ENCODE measurements at regions of chr10 and their contacts with region 1.

Region 1: DNA sequence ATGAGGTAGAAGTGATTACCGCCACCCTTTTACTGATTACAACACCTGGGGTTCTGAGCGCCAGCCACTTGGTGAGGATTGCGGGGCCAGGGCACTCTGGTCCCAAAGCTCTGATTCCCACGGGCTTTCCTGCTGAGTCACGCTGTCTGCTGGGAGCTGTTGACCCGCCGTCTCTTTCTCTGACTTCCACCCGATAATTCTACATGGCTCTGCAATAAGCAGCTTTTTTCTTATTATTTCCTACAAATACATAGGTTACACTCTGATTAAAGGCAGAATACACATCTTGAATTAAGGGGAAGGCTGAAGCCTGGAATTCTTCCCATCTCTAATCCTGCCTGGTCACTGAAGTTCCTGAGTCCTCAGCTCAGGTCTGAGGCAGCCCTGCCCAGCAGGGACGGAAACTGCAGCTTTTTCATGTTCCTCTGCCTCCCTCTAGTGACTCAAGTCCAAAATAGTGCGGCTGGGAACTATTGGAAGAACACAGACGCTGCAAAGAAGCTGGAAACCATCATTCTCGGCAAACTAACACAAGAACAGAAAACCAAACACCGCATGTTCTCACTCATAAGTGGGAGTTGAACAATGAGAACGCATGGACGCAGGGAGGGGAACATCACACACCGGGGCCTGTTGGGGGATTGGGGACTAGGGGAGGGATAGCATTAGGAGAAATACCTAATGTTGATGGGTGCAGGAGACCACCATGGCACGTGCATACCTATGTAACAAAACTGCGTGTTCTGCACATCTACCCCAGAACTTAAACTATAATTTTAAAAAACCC is 178.3 kb downstream of the PRKCQ start:
- DNase-seq: peak; percentile 25 to 69 (median 59)
- H3K4me3 ChIP-seq: no peak overlapping the region
- H3K4me3 Mint-ChIP-seq: peak overlapping the region in 1 of 7 donors; percentile 36
- H3K27ac ChIP-seq: no peak overlapping the region
- H3K27ac Mint-ChIP-seq: peak overlapping the region in 5 of 8 donors; percentile 15 to 89 (median 80)
- H3K4me1 ChIP-seq: peaks cover 12% of the 10 kb centered on the region
- H3K4me1 Mint-ChIP-seq: peaks cover 7 to 16% (median 13%) of the 10 kb centered on the region in 3 donors
- H3K27me3 ChIP-seq: no peaks in the 10 kb centered on the region
- H3K27me3 Mint-ChIP-seq: peaks cover 0 to 1% of the 10 kb centered on the region in 2 donors

Region 2: GRCh38 chr10:6088721-6089390 is 312.9 kb before region 1 on chr10 and contains the start of gene RBM17:
- CTCF ChIA-PET with region 1: interaction called, 13 read pairs
- POLR2A ChIA-PET with region 1: no interaction called
- DNase-seq: peak; percentile 93 to 99 (median 98)
- H3K4me3 ChIP-seq: peak within 1 kb of the TSS; percentile 91
- H3K4me3 Mint-ChIP-seq: peak within 1 kb of the TSS; percentile 85 to 96 (median 92)
- H3K27ac ChIP-seq: peak within 1 kb of the TSS; percentile 79
- H3K27ac Mint-ChIP-seq: peak within 1 kb of the TSS; percentile 67 to 94 (median 88)
- H3K4me1 ChIP-seq: peaks cover 50% of the 10 kb centered on the region
- H3K4me1 Mint-ChIP-seq: peaks cover 50 to 63% (median 58%) of the 10 kb centered on the region in 3 donors
- H3K27me3 ChIP-seq: no peaks in the 10 kb centered on the region
- H3K27me3 Mint-ChIP-seq: peaks cover 0 to 3% of the 10 kb centered on the region in 2 donors
- total RNA-seq, gene RBM17: 269 to 282 TPM

Region 3: DNA sequence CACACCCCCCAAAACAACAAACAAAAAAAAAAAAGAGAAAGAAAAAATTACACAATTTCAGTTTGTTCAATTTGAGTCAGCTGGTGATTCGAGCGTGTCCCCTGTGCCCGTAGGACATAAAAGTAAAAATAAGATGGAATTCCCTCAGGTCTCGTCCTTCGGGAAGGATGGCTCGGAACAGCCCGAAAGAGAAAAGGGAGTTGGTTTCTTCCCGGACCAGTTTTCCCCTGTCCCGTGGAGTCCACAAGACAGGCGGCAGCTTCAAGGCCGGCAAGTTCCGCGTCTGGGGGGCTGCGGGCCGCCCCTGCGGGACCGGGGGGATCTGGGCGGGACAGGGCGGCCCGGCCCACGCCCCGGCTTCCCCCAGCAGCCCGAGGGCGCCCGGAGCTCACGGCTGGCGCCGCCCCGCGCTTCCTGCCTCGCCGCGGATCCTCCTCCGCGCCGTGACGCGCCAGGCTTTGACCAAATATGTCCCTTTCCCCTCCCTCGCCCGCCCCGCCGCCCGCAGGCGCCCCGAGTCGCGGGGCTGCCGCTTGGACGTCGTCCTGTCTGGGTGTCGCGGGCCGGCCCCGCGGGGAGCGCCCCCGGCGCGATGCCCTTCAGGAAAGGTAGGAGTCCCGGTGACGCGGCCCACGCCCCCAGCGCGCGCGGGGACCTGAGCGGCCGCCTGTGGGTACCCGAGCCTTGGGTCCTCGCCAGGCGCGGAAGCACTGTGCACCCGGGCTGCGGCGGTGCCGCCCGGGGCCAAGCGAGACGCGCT is 257.2 kb before region 1 on chr10:
- CTCF ChIA-PET with region 1: interaction called, 10 read pairs
- POLR2A ChIA-PET with region 1: no interaction called
- DNase-seq: peak; percentile 83 to 92 (median 87)
- H3K4me3 ChIP-seq: peak overlapping the region; percentile 74
- H3K4me3 Mint-ChIP-seq: peak overlapping the region; percentile 83 to 92 (median 90)
- H3K27ac ChIP-seq: peak overlapping the region; percentile 73
- H3K27ac Mint-ChIP-seq: peak overlapping the region; percentile 38 to 97 (median 88)
- H3K4me1 ChIP-seq: peaks cover 45% of the 10 kb centered on the region
- H3K4me1 Mint-ChIP-seq: peaks cover 58 to 68% (median 62%) of the 10 kb centered on the region in 3 donors
- H3K27me3 ChIP-seq: no peaks in the 10 kb centered on the region
- H3K27me3 Mint-ChIP-seq: peaks cover 0 to 4% of the 10 kb centered on the region in 2 donors

Region 4: DNA sequence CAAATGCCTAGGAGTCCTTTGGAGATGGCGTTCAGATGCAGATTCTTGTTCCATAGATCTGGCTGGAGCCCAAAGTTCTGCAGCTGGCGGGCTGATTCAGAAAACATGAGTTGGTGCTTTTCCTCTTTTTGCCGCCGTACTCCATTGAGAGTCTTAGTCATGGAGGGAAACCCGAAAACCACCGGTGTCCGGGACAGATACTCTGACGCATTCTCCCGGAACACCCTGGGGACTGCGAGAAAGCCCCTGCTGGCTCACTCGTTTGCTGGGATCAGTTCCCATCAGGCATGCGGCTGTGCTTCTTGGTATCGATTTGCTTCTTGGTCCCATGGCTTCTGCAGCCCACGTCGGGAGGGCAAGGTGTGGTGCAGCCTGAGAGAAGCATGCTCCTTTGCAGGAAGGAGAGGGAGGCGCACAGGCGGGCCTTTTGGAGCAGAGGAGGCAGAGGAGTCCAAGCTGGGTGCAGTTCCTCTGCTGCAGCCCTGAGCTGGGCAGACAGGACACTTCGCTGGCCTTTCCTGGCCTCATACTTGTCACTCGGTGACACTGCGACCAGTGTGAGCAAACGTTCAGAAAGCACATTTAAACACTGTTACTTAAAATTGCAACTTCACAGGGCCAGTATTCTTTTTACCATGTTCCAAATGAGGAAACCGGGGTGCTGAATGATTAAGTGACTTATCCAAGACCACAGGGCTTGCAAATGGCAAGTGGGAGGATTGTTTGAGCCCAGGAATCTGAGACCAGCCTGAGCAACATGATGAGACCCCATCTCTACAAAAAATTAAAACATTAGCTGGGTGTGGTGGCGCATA is 229.7 kb before region 1 on chr10:
- CTCF ChIA-PET with region 1: interaction called, 10 read pairs
- POLR2A ChIA-PET with region 1: interaction called, 5 read pairs
- DNase-seq: no peak
- H3K4me3 ChIP-seq: no peak overlapping the region
- H3K4me3 Mint-ChIP-seq: no peak overlapping the region
- H3K27ac ChIP-seq: no peak overlapping the region
- H3K27ac Mint-ChIP-seq: peak overlapping the region in 3 of 8 donors; percentile 20 to 57 (median 29)
- H3K4me1 ChIP-seq: peaks cover 53% of the 10 kb centered on the region
- H3K4me1 Mint-ChIP-seq: peaks cover 63 to 90% (median 66%) of the 10 kb centered on the region in 3 donors
- H3K27me3 ChIP-seq: no peaks in the 10 kb centered on the region
- H3K27me3 Mint-ChIP-seq: no peaks in the 10 kb centered on the region

Region 5: DNA sequence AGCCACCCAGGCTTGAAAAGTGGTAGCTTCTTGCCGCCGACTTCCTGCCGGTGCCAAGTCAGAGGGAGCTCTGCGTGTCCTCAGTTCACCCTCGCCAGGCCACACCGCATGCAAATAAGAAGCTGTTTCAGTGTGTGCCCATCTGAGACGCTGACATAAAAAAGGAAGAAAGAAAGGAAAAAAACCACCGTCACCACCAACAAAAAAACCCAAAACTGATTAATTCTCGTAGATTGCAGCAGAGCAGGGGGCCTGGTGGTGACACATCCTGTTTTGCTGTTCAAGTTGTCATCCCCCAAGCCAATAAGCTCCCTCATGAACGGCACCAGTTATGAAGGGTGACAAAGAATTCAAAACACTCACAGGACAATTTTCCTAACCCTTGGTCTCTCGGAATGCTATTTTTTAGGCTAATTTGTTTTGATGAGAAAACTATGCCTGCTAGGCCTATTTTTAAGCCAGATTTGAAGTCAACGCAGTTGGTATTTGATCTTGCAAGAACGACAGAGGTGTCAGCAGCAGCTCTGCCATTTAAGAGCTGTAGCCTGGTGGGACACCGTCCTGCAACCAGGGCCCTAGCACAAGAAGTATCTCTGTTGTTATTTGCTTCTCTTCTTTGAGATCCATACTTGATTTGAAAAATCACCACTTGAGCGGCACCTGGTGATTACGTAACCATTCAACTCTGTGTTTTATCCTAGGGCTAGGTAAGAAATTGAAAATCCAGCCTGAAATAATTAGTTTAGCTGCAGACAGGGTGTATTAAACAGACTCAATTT is 53.5 kb before region 1 on chr10:
- CTCF ChIA-PET with region 1: interaction called, 38 read pairs
- POLR2A ChIA-PET with region 1: interaction called, 6 read pairs
- DNase-seq: peak; percentile 62 to 94 (median 88)
- H3K4me3 ChIP-seq: no peak overlapping the region
- H3K4me3 Mint-ChIP-seq: peak overlapping the region; percentile 63 to 80 (median 75)
- H3K27ac ChIP-seq: peak overlapping the region; percentile 49
- H3K27ac Mint-ChIP-seq: peak overlapping the region; percentile 86 to 98 (median 94)
- H3K4me1 ChIP-seq: peaks cover 36% of the 10 kb centered on the region
- H3K4me1 Mint-ChIP-seq: peaks cover 44 to 48% (median 46%) of the 10 kb centered on the region in 3 donors
- H3K27me3 ChIP-seq: no peaks in the 10 kb centered on the region
- H3K27me3 Mint-ChIP-seq: no peaks in the 10 kb centered on the region

Region 6: DNA sequence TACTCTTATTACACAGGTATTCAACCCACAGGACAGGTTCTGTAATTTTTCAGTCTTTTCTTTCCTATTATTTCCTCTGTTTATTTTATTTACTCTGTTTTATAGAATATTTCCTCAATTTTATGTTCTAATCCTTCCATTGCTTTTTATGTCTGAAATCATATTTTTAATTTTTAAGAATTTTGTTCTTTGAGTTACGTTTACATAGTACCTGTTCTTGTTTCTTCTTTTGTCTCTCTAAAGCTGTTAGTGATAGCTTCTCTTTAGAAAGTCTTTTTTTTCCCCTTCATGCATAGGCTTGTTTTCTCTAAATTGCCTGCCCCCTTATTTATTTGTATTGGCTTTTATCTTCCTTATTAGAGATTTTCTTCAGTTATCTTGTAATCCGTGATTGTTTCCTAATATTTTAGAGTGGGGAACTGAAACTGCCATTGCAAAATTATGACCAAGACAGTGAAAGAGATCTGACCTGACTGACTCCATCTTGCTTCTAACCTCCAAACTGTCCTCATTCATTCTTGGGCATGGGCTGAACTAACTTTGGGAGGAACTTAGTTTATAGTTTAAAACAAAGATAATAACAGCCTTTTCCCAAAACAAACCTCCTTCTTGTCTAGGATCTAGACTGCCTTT is 11.4 kb before region 1 on chr10:
- CTCF ChIA-PET with region 1: interaction called, 15 read pairs
- POLR2A ChIA-PET with region 1: no interaction called
- DNase-seq: no peak
- H3K4me3 ChIP-seq: no peak overlapping the region
- H3K4me3 Mint-ChIP-seq: no peak overlapping the region
- H3K27ac ChIP-seq: no peak overlapping the region
- H3K27ac Mint-ChIP-seq: no peak overlapping the region
- H3K4me1 ChIP-seq: no peaks in the 10 kb centered on the region
- H3K4me1 Mint-ChIP-seq: no peaks in the 10 kb centered on the region
- H3K27me3 ChIP-seq: no peaks in the 10 kb centered on the region
- H3K27me3 Mint-ChIP-seq: no peaks in the 10 kb centered on the region

Region 7: GRCh38 chr10:6445501-6446316 is 44.0 kb after region 1 on chr10:
- CTCF ChIA-PET with region 1: no interaction called
- POLR2A ChIA-PET with region 1: no interaction called
- DNase-seq: peak; percentile 25 to 71 (median 45)
- H3K4me3 ChIP-seq: no peak overlapping the region
- H3K4me3 Mint-ChIP-seq: peak overlapping the region in 2 of 7 donors; percentile 13 to 82
- H3K27ac ChIP-seq: no peak overlapping the region
- H3K27ac Mint-ChIP-seq: peak overlapping the region; percentile 1 to 95 (median 48)
- H3K4me1 ChIP-seq: peaks cover 6% of the 10 kb centered on the region
- H3K4me1 Mint-ChIP-seq: peaks cover 16 to 43% (median 23%) of the 10 kb centered on the region in 3 donors
- H3K27me3 ChIP-seq: no peaks in the 10 kb centered on the region
- H3K27me3 Mint-ChIP-seq: no peaks in the 10 kb centered on the region

Measured in CD8-positive, alpha-beta memory T cell (primary cell).